Heart left ventricle (tissue), 16 donors: ENCODE measurements at regions of chr1 and their contacts with region 1.

Region 1: DNA sequence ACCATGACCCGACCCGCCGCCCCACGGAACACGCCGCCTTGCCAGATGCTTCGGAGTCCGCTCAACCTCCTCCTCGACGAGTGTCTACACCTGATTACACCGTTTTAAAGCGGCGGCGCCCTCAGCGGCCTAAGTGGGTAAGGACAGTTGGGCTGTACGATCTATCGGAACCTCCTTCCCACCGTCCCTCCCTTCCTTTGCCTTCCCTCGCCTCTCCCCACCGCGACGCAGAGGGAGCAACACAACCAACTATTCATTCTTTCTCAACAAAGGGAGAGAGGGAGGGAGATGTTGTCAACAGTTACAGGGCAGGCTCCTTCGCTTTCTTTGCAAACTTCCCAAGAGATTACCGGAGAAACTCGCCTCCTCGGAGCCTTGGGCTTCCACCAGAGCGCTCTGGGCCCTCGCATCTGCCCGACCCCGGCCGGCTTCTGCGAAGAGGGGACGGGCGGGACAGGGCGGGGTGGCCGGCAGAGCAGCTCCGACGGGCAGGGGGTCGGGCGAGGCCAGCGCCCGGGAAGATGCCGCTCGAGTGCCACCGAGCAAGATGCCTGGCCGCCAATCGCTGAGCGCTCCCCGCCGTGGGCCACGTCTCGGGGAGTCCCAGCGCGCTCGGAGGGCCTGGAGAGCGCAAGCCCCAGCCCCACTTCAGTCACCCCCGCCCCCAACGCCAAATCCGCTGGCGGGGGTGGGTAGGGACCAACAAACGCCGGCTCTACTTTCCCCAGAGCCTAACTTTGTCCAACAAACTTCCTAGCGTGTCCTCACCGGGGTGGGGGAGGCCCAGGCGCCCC is 683 bp downstream of the BCAR3 start:
- DNase-seq: peak; percentile 80 to 91 (median 85)
- ATAC-seq: peak; percentile 89 to 91 (median 90)
- H3K4me3 ChIP-seq: peak overlapping the region; percentile 74 to 96 (median 90)
- H3K27ac ChIP-seq: peak overlapping the region; percentile 84 to 94 (median 92)
- H3K4me1 ChIP-seq: peaks cover 0 to 53% (median 32%) of the 10 kb centered on the region in 12 donors
- H3K27me3 ChIP-seq: no peaks in the 10 kb centered on the region
- CTCF ChIP-seq: peak; percentile 40 to 73 (median 58)
- POLR2A ChIP-seq: peak in 1 of 2 donors; percentile 41

Region 2: GRCh38 chr1:93447516-93448291 is 233.2 kb before region 1 on chr1 and contains the start of gene FNBP1L:
- intact Hi-C with region 1: loop called in 1 of 10 experiments (anchors 1 kb)
- DNase-seq: peak; percentile 83 to 87 (median 85)
- ATAC-seq: peak; percentile 83 to 96 (median 96)
- H3K4me3 ChIP-seq: peak within 1 kb of the TSS; percentile 70 to 100 (median 95)
- H3K27ac ChIP-seq: peak within 1 kb of the TSS; percentile 54 to 95 (median 89)
- H3K4me1 ChIP-seq: peaks cover 0 to 30% (median 9%) of the 10 kb centered on the region in 12 donors
- H3K27me3 ChIP-seq: no peaks in the 10 kb centered on the region
- CTCF ChIP-seq: no peak
- POLR2A ChIP-seq: peak in 1 of 2 donors; percentile 65
- total RNA-seq, gene FNBP1L: 20.5 to 38.8 (median 25.5) TPM

Region 3: GRCh38 chr1:93701619-93702018 is 20.7 kb after region 1 on chr1:
- intact Hi-C with region 1: loop called in 1 of 10 experiments (anchors 1 kb)
- DNase-seq: peak in 1 of 5 donors; percentile 40
- ATAC-seq: peak in 3 of 4 donors; percentile 10 to 31 (median 23)
- H3K4me3 ChIP-seq: no peak overlapping the region
- H3K27ac ChIP-seq: peak overlapping the region in 2 of 12 donors; percentile 69 to 83
- H3K4me1 ChIP-seq: peaks cover 0 to 41% (median 22%) of the 10 kb centered on the region in 12 donors
- H3K27me3 ChIP-seq: no peaks in the 10 kb centered on the region
- CTCF ChIP-seq: no peak
- POLR2A ChIP-seq: no peak

Region 4: GRCh38 chr1:93814059-93814794 is 133.3 kb after region 1 on chr1:
- intact Hi-C with region 1: loop called in 8 of 10 experiments (anchors 2 to 5 kb)
- DNase-seq: peak in 4 of 5 donors; percentile 51 to 70 (median 59)
- ATAC-seq: peak; percentile 65 to 84 (median 77)
- H3K4me3 ChIP-seq: no peak overlapping the region
- H3K27ac ChIP-seq: no peak overlapping the region
- H3K4me1 ChIP-seq: peaks cover 0 to 57% (median 31%) of the 10 kb centered on the region in 12 donors
- H3K27me3 ChIP-seq: no peaks in the 10 kb centered on the region
- CTCF ChIP-seq: peak; percentile 94 to 100 (median 97)
- POLR2A ChIP-seq: no peak

Region 5: GRCh38 chr1:93827633-93828366 is 146.8 kb after region 1 on chr1:
- intact Hi-C with region 1: no loop called
- DNase-seq: no peak
- ATAC-seq: no peak
- H3K4me3 ChIP-seq: no peak overlapping the region
- H3K27ac ChIP-seq: no peak overlapping the region
- H3K4me1 ChIP-seq: no peaks in the 10 kb centered on the region
- H3K27me3 ChIP-seq: no peaks in the 10 kb centered on the region
- CTCF ChIP-seq: no peak
- POLR2A ChIP-seq: no peak